GM10248 (cell line): ENCODE measurements at regions of chr15 and their contacts with region 1.

Region 1: DNA sequence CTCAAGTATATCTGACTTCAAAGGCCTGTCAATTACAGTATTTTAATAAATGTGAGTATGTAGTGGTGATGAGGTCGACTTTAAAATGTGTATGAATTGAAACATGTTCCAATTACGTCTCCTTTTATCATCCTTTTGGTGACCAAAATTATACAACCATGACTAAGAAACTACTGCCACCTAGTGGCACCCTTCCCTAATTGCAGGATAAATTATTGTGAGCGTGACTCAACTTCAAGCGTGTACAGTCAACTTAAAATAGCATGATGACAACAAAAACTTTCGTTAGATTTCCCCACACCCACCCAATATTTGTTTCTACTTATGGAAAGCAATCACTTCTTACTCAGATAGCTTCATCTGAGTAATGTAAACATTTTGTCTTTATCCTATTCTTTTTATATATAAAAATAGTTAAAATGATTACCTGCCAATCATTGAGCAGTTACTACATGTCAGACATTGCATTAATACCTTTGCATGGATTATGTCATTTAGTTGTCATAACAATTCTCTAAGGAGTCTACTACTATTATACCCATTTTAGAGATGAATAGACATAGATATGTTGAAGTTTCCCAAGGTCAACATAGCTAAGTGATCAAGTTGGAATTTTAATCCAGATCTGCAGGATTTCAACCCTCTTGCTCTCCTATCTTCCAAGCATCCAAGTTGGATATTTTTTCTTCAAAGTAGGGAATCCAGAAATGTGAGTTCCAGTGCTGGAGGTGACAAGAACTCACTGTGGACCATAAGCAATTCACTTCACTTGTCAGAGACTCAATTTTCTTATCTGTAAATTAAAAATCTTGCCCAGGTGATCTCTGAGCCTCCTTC is 106.0 kb downstream of the MEX3B start:
- DNase-seq: peak; percentile 40
- CTCF ChIP-seq: peak; percentile 68

Region 2: GRCh38 chr15:81929557-81929956 is 10.3 kb before region 1 on chr15:
- CTCF ChIA-PET with region 1: interaction called, 12 read pairs
- POLR2A ChIA-PET with region 1: no interaction called
- DNase-seq: no peak
- CTCF ChIP-seq: no peak

Region 3: DNA sequence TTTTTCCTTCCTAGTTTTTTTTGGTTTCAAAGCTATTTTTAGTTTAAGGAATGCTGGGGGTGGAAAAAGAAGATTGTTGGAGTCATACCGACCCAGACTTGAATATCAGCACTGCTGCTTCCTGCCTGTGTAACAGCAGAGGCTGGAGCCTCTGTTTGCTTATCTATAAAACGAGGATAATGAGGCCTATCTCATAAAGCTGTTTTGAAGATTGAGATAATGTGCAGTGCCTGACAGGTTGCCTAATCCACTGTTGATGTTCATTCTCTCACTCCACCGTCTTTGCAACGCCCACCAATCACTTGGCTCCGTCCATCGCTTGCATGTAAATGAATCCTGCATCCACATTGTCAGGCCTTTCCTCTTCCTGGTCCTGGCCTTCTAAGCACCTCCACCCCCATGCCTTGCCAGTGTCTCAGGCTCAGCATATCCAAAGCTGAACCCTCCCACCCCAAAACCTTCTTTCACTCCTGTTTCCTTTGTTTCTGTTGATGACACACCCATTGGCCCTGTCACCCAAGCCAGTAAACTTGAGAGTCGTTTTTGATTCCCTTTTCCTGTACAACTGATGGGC is 11.1 kb after region 1 on chr15:
- CTCF ChIA-PET with region 1: interaction called, 12 read pairs
- POLR2A ChIA-PET with region 1: no interaction called
- DNase-seq: no peak
- CTCF ChIP-seq: no peak